Activated CD8-positive, alpha-beta T cell treated with anti-CD3 and anti-CD28 coated beads for 36 hours (primary cell): ENCODE measurements at regions of chr3 and their contacts with region 1.

Region 1: DNA sequence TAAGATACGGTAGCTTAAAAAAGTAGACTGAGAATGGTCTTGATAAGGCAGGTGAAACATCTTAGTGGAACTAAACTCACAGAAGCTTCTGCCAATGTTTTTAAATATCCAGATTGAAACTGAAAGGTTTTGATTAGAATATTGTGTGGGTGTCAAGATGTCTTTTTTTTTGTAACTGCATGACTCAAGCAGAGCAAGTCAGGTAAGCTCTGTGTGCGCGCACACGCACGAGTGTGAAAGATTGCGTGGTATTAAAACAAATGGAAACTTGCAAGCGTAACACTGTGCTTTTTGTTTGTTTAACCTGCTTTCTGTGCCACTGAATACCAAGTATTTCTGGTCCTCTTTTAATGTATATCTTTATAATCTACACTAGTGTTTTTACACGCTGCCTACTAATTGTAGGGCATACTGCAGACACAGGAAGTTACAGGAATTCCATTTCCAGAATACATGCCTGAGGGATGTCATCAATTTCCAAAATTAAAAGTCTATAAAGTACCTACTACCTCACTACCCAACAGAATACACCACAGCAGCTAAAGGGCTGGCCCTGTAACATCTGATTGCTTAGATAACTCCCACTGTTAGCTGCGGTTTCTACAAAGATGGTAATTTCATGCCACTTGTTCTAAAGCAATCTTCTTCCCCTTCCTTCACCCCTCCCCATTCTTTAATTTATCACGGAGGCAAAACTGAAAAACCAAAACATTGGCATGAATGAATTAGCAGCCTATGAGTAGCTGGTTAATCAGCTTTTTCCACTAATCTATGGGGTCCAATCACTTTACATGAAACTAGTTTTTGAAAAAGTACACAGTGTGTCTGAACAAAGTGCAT is 472.8 kb downstream of the SHQ1 start:
- DNase-seq: peak; percentile 74
- ATAC-seq: peak; percentile 83
- H3K4me3 Mint-ChIP-seq: peak overlapping the region; percentile 58
- H3K27ac Mint-ChIP-seq: peak overlapping the region; percentile 95
- H3K4me1 Mint-ChIP-seq: peaks cover 61% of the 10 kb centered on the region
- H3K27me3 Mint-ChIP-seq: no peaks in the 10 kb centered on the region
- CTCF ChIP-seq: no peak

Region 2: DNA sequence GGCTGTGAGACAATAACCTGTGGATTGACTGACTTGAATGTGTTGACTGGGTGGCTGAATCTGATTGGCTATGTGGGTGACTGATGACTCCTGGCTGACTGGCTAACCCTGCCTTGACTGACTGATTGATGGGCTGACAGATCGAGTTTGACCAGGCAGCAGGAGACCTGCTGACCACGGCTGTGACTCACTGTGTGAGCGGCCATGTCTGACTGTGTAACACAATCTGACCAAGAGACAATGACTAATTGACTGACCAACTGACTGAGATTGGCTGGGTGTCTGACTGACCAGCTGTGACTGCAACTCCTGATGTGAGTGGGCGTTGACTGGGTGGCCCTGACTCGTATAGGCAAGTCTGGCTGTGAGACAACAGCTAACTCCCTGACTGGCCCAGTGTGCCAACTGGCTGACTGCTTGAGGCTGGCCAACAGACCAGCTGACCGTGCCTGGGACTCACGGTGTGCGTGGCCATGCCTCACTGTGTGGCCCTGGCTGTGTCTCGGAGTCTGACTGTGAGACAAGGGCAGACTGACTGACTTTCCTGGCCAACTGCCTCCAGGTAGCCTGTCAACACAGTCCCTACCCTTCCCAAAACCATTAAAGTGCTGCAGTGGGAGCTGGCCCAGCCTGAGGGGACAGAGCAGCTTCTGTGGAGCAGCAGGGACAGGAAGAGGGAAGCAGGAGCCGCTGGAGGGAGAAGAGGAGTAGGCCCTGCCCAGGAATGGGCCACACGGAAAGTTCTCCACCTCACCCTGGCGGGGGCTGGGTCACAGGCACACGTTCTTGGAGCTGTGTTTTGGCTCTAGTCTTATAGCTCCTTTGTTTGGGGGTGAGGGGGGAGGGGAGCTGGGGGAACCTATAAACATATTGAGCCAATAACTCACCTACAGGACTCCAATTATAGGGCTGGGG is 36.1 kb before region 1 on chr3:
- CTCF ChIA-PET with region 1: no interaction called
- POLR2A ChIA-PET with region 1: no interaction called
- intact Hi-C with region 1: no loop called
- DNase-seq: peak; percentile 32
- ATAC-seq: peak; percentile 2
- H3K4me3 Mint-ChIP-seq: no peak overlapping the region
- H3K27ac Mint-ChIP-seq: no peak overlapping the region
- H3K4me1 Mint-ChIP-seq: peaks cover 25% of the 10 kb centered on the region
- H3K27me3 Mint-ChIP-seq: no peaks in the 10 kb centered on the region
- CTCF ChIP-seq: no peak

Region 3: DNA sequence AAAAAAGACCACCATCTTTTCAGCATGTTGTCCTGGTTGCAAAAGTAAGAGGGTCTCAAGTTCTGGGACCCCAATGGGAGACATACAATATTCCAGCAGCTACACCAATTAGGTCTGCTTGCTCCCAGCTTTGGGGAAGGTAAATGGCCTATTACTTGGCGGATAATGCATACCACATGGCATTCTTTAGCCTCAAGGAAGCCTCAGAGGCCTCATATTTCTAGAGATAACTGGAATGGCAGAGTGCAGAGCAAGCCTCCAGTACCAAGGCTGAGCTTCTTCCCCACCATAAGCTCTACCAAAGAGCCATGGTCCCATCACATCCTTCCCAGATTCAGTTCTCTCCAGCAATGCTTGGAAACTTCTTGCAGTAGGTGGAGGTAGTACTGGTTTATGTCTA is 21.0 kb before region 1 on chr3:
- CTCF ChIA-PET with region 1: no interaction called
- POLR2A ChIA-PET with region 1: no interaction called
- intact Hi-C with region 1: no loop called
- DNase-seq: no peak
- ATAC-seq: no peak
- H3K4me3 Mint-ChIP-seq: no peak overlapping the region
- H3K27ac Mint-ChIP-seq: no peak overlapping the region
- H3K4me1 Mint-ChIP-seq: no peaks in the 10 kb centered on the region
- H3K27me3 Mint-ChIP-seq: no peaks in the 10 kb centered on the region
- CTCF ChIP-seq: no peak

Region 4: DNA sequence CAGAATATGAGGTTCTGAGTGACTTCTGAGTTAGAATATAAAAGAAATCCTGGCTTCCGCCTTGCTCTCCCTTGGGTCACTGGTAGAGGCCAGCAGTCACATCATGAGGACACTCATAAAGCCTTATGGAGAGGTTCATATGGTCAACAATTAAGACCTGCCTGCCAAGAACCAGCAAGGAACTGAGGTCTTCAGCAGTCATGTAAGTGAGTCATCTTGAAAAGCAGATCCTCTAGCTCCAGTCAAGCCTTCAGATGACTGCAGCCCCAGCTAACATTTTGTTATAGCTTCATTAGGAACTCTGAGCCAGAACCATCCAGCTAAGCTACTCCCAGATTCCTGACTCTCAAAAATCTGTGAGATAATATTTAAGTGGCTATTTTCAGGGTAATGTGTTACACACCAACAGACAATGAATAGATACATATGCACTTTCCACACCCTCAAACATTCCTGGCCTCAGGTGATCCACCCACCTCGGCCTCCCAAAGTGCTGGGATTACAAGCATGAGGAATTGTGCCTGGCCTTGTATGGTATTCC is 25.6 kb after region 1 on chr3:
- CTCF ChIA-PET with region 1: no interaction called
- POLR2A ChIA-PET with region 1: no interaction called
- intact Hi-C with region 1: no loop called
- DNase-seq: no peak
- ATAC-seq: no peak
- H3K4me3 Mint-ChIP-seq: no peak overlapping the region
- H3K27ac Mint-ChIP-seq: no peak overlapping the region
- H3K4me1 Mint-ChIP-seq: peaks cover 57% of the 10 kb centered on the region
- H3K27me3 Mint-ChIP-seq: no peaks in the 10 kb centered on the region
- CTCF ChIP-seq: no peak

Region 5: DNA sequence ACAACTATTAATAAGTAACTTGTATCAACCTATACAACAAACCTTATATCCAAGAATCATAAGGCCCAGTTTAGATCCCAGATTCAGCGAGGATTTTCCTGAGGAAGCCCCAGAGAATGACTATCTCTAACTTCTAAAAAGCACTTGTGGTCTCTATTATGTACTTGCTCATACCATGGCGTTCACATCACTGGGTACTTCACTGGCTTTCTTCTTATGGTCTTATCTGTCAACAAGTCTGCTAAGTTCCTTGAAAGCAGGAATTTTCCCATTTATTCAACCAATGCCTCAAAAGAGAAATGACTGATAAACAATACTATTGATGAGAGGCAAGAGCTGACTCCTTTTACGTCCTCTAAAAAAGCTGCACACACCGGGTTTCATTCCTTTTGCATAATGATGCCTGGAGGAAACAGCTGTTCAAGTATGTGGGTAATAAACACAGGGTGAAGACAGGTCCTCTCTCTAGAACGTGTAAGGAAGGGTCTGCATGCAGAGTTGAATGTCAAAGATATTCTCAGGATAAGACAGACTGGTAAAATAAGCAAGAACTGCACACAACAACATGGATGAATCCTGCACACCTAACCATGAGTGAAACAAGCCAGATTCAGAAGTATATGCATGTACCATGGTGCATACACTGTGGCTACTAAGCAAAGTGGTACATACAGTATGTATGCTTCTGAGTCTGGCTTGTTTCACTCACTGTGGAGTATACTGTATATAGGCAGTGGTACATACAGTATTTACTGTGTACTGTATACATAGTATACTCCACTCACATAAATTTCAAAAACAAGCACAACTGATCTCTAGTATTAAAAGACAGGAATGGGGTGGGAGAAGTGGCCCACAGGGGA is 64.1 kb after region 1 on chr3:
- CTCF ChIA-PET with region 1: no interaction called
- POLR2A ChIA-PET with region 1: interaction called, 3 read pairs
- intact Hi-C with region 1: loop called (anchors 5 kb)
- DNase-seq: no peak
- ATAC-seq: no peak
- H3K4me3 Mint-ChIP-seq: no peak overlapping the region
- H3K27ac Mint-ChIP-seq: no peak overlapping the region
- H3K4me1 Mint-ChIP-seq: peaks cover 82% of the 10 kb centered on the region
- H3K27me3 Mint-ChIP-seq: no peaks in the 10 kb centered on the region
- CTCF ChIP-seq: no peak

Region 6: DNA sequence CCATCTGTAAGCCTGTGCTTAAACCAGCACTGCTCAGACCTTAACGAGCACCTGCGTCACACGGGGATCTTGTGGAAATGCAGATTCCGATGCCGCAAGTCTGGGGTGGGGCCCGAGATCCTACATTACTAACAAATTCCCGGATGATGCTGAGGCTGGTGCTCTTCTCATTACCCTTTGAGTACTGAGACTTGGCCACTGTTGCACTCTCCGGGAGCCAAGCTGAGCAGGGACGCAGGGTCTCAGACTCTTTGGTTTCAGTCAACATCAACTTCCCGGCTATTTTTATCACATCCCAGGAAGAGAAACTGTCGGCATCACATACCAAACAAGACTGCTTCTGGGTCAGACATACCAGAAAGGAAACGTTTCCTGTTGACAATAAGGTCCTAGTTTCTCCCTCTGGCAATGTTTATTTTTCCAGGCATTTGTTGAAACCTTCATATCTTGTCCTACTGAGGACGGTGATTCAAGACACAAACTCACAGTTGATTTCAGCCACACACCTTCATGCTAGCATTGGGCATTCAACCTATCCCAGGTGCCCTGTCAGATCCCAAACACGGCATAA is 196.3 kb after region 1 on chr3:
- CTCF ChIA-PET with region 1: no interaction called
- POLR2A ChIA-PET with region 1: no interaction called
- intact Hi-C with region 1: no loop called
- DNase-seq: no peak
- ATAC-seq: no peak
- H3K4me3 Mint-ChIP-seq: no peak overlapping the region
- H3K27ac Mint-ChIP-seq: no peak overlapping the region
- H3K4me1 Mint-ChIP-seq: no peaks in the 10 kb centered on the region
- H3K27me3 Mint-ChIP-seq: no peaks in the 10 kb centered on the region
- CTCF ChIP-seq: no peak